ENCODE measurements at regions of chr1 and their contacts with region 1.

Region 1: GRCh38 chr1:89762779-89763648 is 57.8 kb upstream of the LRRC8D start:
- DNase-seq: peak; percentile 94
- ATAC-seq: peak; percentile 99
- H3K4me3 Mint-ChIP-seq: peak overlapping the region; percentile 68
- H3K27ac Mint-ChIP-seq: peak overlapping the region; percentile 89
- H3K4me1 Mint-ChIP-seq: peaks cover 54% of the 10 kb centered on the region
- H3K27me3 Mint-ChIP-seq: no peaks in the 10 kb centered on the region

Region 2: DNA sequence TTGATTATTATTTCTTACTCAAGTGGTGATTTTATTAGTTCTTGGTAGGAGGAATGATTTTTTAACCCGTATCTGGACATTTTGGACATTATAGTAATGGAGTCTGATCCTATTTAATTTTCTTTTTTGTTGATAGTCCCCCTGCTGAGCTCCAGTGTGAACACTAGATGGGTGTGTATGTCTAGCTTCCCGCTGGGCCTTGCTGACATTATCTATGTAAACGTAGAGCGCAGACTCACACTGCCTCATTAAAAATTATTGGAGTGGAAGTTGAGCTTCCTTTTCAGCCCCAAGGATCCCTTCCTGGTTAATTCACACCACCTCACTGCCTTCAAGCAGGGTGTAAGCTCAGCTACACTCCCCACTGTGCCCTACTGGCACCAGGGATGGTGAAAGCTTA is 1546.6 kb before region 1 on chr1:
- CTCF ChIA-PET with region 1: no interaction called
- POLR2A ChIA-PET with region 1: no interaction called
- intact Hi-C with region 1: no loop called
- DNase-seq: no peak
- ATAC-seq: no peak
- H3K4me3 Mint-ChIP-seq: no peak overlapping the region
- H3K27ac Mint-ChIP-seq: no peak overlapping the region
- H3K4me1 Mint-ChIP-seq: no peaks in the 10 kb centered on the region
- H3K27me3 Mint-ChIP-seq: peaks cover 9% of the 10 kb centered on the region

Region 3: DNA sequence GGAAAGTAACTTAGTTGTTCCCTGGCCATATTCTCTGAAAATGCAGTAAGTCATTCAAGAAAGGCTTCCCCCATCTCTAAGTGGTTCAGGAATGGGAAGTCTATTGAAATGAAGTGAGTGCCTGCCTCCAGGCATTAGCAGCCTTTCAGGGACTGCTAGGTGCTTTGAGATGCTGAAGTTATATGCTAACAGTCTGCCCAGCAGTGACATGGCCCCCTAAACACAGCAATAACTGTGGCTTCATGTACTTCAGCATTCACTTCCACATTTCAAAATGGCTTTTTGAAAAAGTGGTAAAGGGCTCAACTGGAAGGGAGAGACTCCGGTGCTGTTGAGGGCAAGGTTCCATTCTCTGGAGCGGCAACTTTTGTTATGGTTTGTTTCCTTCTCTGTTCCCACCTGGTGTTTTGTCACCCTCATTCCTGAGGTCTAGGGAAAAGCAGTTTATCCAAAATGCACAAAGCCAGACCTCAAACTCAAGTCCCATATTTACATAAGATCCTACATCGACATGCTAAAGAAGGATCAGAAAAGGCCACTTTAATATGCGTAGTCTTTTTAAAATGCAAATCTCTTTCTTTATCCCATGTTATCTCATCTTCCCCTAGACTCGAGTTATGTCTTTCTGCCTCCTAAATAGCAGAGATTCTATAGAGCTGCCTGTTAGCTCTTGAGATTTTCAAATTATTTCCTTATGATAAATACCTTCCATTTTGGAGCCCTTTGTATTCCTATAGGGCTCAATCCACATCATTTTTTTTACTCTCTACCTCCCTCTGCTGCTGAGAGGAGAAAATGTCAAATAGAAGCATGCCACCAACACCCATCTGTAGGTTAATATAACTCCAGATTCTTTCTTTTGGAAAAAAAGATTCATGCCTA is 164.3 kb before region 1 on chr1:
- CTCF ChIA-PET with region 1: interaction called, 30 read pairs
- POLR2A ChIA-PET with region 1: interaction called, 6 read pairs
- intact Hi-C with region 1: loop called in 1 of 2 experiments (anchors 2 kb)
- DNase-seq: no peak
- ATAC-seq: peak; percentile 14
- H3K4me3 Mint-ChIP-seq: no peak overlapping the region
- H3K27ac Mint-ChIP-seq: peak overlapping the region; percentile 99
- H3K4me1 Mint-ChIP-seq: peaks cover 85% of the 10 kb centered on the region
- H3K27me3 Mint-ChIP-seq: no peaks in the 10 kb centered on the region

Region 4: GRCh38 chr1:89641781-89642180 is 121.2 kb before region 1 on chr1:
- CTCF ChIA-PET with region 1: interaction called, 157 read pairs
- POLR2A ChIA-PET with region 1: no interaction called
- intact Hi-C with region 1: no loop called
- DNase-seq: no peak
- ATAC-seq: no peak
- H3K4me3 Mint-ChIP-seq: no peak overlapping the region
- H3K27ac Mint-ChIP-seq: peak overlapping the region; percentile 35
- H3K4me1 Mint-ChIP-seq: peaks cover 75% of the 10 kb centered on the region
- H3K27me3 Mint-ChIP-seq: no peaks in the 10 kb centered on the region

Region 5: DNA sequence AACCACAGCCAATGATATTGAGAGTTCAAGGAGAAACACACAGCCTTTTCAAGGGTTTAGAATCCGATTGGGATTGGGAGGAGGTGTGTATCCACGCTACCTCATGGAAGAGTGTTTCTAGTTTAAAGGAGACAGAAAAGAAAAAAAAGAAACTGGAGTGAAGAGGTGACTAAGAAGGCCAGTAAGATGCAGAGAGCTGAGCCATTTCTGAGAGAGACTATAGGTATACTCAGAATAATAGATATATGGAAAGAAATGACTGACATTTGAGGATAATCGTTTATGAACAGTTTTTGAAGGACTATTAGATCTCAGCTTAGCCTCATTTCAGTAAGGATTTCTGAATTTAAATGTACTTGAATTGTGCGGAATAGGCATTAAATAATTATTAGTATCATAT is 87.3 kb before region 1 on chr1:
- CTCF ChIA-PET with region 1: interaction called, 18 read pairs
- POLR2A ChIA-PET with region 1: interaction called, 3 read pairs
- intact Hi-C with region 1: no loop called
- DNase-seq: no peak
- ATAC-seq: peak; percentile 75
- H3K4me3 Mint-ChIP-seq: no peak overlapping the region
- H3K27ac Mint-ChIP-seq: peak overlapping the region; percentile 84
- H3K4me1 Mint-ChIP-seq: peaks cover 78% of the 10 kb centered on the region
- H3K27me3 Mint-ChIP-seq: no peaks in the 10 kb centered on the region

Region 6: GRCh38 chr1:89739013-89739843 is 23.8 kb before region 1 on chr1:
- CTCF ChIA-PET with region 1: interaction called, 21 read pairs
- POLR2A ChIA-PET with region 1: no interaction called
- intact Hi-C with region 1: loop called in 1 of 2 experiments (anchors 2 kb)
- DNase-seq: peak; percentile 76
- ATAC-seq: peak; percentile 94
- H3K4me3 Mint-ChIP-seq: peak overlapping the region; percentile 55
- H3K27ac Mint-ChIP-seq: peak overlapping the region; percentile 78
- H3K4me1 Mint-ChIP-seq: peaks cover 40% of the 10 kb centered on the region
- H3K27me3 Mint-ChIP-seq: no peaks in the 10 kb centered on the region

Region 7: DNA sequence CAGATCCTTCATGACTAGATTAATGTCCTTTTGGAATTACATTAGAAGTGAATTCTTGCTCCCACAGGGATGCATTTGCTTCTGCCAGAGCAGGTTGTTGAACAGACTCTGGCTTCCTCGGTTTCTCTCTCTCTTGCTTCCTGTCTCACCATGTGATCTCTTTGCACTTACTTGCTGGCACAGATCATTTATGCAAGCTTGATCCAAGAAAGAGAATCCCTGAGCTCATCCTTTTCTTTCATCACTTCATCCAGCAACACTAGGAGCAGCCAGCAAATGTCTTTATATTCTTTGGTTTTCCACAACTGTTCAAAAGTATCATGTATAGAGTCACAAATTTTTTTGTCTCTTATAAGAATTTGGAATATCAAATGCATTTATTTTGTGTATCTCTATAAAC is 545.4 kb after region 1 on chr1:
- CTCF ChIA-PET with region 1: no interaction called
- POLR2A ChIA-PET with region 1: no interaction called
- intact Hi-C with region 1: no loop called
- DNase-seq: no peak
- ATAC-seq: no peak
- H3K4me3 Mint-ChIP-seq: no peak overlapping the region
- H3K27ac Mint-ChIP-seq: no peak overlapping the region
- H3K4me1 Mint-ChIP-seq: no peaks in the 10 kb centered on the region
- H3K27me3 Mint-ChIP-seq: no peaks in the 10 kb centered on the region

Measured in activated CD4-positive, alpha-beta T cell treated with anti-CD3 and anti-CD28 coated beads for 36 hours (primary cell).